Right cardiac atrium (tissue), 5 donors: ENCODE measurements at regions of chr10 and their contacts with region 1.

Region 1: GRCh38 chr10:89535171-89536012 is at the start of gene SLC16A12:
- DNase-seq: peak; percentile 25 to 73 (median 69)
- ATAC-seq: peak; percentile 74 to 87
- H3K4me3 ChIP-seq: peak within 1 kb of the TSS; percentile 72
- H3K27ac ChIP-seq: no peak within 1 kb of the TSS
- H3K4me1 ChIP-seq: no peaks in the 10 kb centered on the region
- H3K27me3 ChIP-seq: no peaks in the 10 kb centered on the region
- total RNA-seq, gene SLC16A12: 3.3 to 7.2 (median 5.0) TPM

Region 2: GRCh38 chr10:89470628-89471027 is 64.8 kb before region 1 on chr10:
- intact Hi-C with region 1: loop called in 3 of 4 experiments (anchors 5 to 10 kb)
- DNase-seq: no peak
- ATAC-seq: no peak
- H3K4me3 ChIP-seq: no peak overlapping the region
- H3K27ac ChIP-seq: no peak overlapping the region
- H3K4me1 ChIP-seq: peaks cover 4% of the 10 kb centered on the region
- H3K27me3 ChIP-seq: no peaks in the 10 kb centered on the region